WTC11 (cell line): ENCODE measurements at regions of chr6 and their contacts with region 1.

Region 1: GRCh38 chr6:13574149-13574570 is 241 bp upstream of the SIRT5 start:
- DNase-seq: peak; percentile 95
- ATAC-seq: peak; percentile 90
- H3K4me3 Mint-ChIP-seq: peak overlapping the region; percentile 92
- H3K27ac Mint-ChIP-seq: peak overlapping the region; percentile 98
- H3K4me1 Mint-ChIP-seq: peaks cover 36% of the 10 kb centered on the region
- H3K27me3 Mint-ChIP-seq: no peaks in the 10 kb centered on the region
- CTCF ChIP-seq: no peak; the same call in 1 of the 2 replicates

Region 2: GRCh38 chr6:13397359-13398068 is 176.6 kb before region 1 on chr6:
- CTCF ChIA-PET with region 1: interaction called, 14 read pairs
- POLR2A ChIA-PET with region 1: no interaction called
- DNase-seq: no peak
- ATAC-seq: no peak
- H3K4me3 Mint-ChIP-seq: no peak overlapping the region
- H3K27ac Mint-ChIP-seq: no peak overlapping the region
- H3K4me1 Mint-ChIP-seq: peaks cover 34% of the 10 kb centered on the region
- H3K27me3 Mint-ChIP-seq: no peaks in the 10 kb centered on the region
- CTCF ChIP-seq: no peak

Region 3: DNA sequence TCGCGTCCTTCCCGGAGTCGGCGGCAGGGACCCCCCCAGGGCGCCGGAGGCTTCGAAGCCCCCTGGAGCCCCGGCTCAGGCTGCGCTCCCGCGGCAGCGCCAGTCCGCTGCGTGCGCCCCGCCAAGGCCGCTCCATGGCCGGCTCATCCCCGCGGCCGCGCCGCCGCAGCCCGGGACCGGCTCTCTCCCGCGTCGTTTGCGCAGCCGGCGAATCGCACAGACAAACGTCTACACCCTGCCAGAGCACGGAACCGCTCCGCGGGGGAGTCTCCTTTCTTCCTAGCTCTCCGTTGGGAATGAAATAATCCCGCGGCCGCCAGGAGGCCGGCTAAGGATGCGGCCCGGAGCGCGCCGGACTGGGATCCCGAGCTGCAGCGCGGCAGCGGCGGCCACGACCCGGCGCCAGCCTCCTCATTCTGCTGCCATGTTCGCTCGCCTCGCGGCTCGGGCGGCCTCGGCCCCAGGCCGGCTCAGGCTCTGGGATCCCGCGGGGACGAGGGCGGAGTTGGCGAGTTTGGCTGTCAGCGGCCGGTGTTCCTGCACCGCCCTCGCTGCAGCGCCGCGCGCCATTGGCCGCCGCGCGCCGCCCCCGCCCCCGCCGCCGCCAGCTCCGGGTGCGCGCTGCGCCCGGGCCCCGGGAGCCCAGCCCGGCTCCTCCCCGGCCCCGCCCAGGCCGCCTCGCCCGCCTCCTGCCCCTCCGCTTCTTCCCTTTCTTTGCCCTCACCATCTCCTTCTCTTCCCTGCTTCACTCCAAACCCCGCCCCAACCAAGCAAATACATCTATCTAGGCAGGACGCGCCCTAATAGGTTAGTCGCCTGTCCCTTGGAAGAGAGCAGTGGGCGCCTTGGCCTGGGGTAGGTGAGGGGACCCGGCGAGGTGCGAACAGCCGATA is 86.8 kb before region 1 on chr6 and contains the start of gene GFOD1:
- CTCF ChIA-PET with region 1: interaction called, 32 read pairs
- POLR2A ChIA-PET with region 1: interaction called, 18 read pairs
- DNase-seq: peak; percentile 83
- ATAC-seq: peak; percentile 81
- H3K4me3 Mint-ChIP-seq: peak within 1 kb of the TSS; percentile 93
- H3K27ac Mint-ChIP-seq: no peak within 1 kb of the TSS
- H3K4me1 Mint-ChIP-seq: peaks cover 24% of the 10 kb centered on the region
- H3K27me3 Mint-ChIP-seq: peaks cover 66% of the 10 kb centered on the region
- CTCF ChIP-seq: no peak
- total RNA-seq, gene GFOD1: 5.2 to 8.5 TPM (median 5.8 TPM) in 3 replicates

Region 4: DNA sequence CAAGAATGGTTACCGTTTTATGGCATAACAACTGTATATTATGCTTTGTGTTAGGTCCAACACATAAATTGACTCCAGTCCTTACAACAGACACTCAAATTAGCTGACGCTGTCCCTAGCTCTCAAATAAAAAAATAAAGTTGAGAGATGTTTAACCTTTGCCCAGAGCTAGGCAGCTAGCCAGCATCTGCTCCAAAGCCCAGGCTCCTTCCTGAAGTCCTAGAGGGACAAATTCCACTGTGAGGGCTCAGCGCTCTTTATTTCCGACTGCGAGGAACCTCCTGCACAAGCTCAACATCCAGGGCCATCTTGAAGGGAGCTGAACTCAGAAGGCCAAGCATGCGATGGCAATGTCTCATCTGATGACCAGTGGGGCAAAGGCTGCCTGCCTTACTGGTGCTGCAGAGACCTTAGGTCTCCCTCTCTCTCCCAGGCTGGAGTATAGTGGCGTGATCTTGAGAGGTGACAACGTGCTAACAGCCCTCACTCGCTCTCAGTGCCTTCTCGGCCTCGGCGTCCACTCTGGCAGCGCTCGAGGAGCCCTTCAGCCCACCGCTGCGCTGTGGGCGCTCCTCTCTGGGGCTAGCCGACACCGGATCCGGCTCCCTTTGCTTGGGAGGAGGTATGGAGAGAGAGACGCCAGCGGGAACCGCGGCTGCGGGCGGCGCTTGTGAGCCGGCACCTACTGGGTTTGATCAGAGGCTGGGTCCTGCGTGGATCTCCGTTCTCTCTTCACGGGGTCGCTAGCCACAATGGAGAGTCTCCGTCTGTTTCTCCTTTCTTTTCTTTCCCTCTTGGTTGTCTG is 62.0 kb before region 1 on chr6:
- CTCF ChIA-PET with region 1: interaction called, 10 read pairs
- POLR2A ChIA-PET with region 1: interaction called, 4 read pairs
- DNase-seq: no peak
- ATAC-seq: no peak
- H3K4me3 Mint-ChIP-seq: no peak overlapping the region
- H3K27ac Mint-ChIP-seq: no peak overlapping the region
- H3K4me1 Mint-ChIP-seq: no peaks in the 10 kb centered on the region
- H3K27me3 Mint-ChIP-seq: no peaks in the 10 kb centered on the region; the same call in 1 of the 2 replicates
- CTCF ChIP-seq: no peak

Region 5: DNA sequence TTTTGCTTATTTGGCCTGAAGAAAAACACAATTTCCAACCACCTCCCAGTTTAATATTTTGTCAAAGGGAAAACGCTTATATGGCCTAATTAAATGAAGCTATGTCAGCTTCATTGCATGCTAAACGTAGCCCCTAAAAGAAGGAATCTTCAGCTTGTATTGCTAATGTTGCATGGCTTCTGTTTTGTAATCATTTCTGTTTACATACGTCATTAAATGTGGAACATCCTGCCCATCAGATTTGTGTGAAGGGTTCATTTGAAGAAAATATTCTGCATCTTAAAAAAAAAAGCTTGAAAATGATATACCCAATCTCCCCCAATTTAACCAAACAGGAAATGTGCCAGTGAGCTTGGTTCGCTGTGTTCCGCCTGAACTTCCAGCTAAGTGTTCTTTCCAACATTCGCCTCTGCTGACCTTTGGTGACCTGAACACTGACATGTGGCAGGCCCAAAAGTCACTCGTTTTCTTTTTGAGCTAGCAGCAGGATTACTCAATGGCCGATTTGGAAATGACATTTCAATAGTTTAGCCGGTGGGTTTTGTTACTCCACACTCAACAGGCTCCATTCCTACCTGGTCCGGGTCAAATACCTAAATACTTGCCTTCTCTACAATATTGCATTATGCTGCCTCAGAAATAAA is 12.4 kb before region 1 on chr6:
- CTCF ChIA-PET with region 1: interaction called, 15 read pairs
- POLR2A ChIA-PET with region 1: interaction called, 4 read pairs
- DNase-seq: no peak
- ATAC-seq: no peak
- H3K4me3 Mint-ChIP-seq: no peak overlapping the region
- H3K27ac Mint-ChIP-seq: no peak overlapping the region
- H3K4me1 Mint-ChIP-seq: peaks cover 31% of the 10 kb centered on the region
- H3K27me3 Mint-ChIP-seq: no peaks in the 10 kb centered on the region
- CTCF ChIP-seq: no peak

Region 6: DNA sequence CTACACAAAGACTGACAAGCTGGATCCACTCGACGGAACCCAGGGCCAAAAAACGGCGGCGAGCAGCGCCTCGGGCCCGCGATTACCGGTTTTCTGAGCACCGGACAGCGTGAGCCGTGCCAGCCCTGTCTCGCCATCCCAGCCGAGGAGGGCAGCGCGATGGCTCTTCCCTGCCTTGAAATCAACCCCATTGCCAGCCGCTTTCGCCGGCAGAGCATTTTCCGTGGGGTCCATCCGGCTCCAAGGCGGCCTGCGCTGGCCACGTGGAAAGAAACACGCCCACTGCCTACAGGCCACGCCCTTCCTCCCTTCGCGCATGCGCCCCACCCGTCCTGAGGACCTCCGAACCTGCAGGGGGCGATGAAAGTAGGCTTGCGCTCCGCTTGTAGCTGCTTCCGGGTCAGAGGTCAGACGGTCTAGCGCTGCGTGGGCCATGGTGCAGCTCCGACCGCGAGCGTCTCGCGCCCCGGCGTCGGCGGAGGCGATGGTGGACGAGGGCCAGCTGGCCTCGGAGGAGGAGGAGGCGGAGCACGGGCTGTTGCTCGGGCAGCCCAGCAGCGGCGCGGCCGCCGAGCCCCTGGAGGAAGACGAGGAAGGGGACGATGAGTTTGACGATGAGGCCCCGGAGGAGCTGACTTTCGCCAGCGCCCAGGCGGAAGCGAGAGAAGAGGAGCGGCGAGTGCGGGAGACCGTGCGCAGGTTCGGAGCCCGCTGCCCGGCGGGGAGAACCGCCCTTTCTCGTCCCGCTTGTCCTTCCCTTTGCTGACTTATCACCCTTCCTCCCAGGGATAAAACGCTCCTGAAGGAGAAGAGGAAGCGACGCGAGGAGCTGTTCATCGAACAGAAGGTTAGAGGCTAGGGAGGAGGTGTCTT is 41.0 kb after region 1 on chr6 and contains the start of gene NOL7:
- CTCF ChIA-PET with region 1: interaction called, 41 read pairs
- POLR2A ChIA-PET with region 1: interaction called, 12 read pairs
- DNase-seq: peak; percentile 96
- ATAC-seq: peak; percentile 93
- H3K4me3 Mint-ChIP-seq: peak within 1 kb of the TSS; percentile 96
- H3K27ac Mint-ChIP-seq: peak within 1 kb of the TSS; percentile 93
- H3K4me1 Mint-ChIP-seq: peaks cover 25% of the 10 kb centered on the region
- H3K27me3 Mint-ChIP-seq: no peaks in the 10 kb centered on the region
- CTCF ChIP-seq: peak; percentile 37
- total RNA-seq, gene NOL7: 65.3 to 76.1 TPM (median 66.5 TPM) in 3 replicates